HCT116 (cell line): ENCODE measurements at regions of chr15 and their contacts with region 1.

Region 1: DNA sequence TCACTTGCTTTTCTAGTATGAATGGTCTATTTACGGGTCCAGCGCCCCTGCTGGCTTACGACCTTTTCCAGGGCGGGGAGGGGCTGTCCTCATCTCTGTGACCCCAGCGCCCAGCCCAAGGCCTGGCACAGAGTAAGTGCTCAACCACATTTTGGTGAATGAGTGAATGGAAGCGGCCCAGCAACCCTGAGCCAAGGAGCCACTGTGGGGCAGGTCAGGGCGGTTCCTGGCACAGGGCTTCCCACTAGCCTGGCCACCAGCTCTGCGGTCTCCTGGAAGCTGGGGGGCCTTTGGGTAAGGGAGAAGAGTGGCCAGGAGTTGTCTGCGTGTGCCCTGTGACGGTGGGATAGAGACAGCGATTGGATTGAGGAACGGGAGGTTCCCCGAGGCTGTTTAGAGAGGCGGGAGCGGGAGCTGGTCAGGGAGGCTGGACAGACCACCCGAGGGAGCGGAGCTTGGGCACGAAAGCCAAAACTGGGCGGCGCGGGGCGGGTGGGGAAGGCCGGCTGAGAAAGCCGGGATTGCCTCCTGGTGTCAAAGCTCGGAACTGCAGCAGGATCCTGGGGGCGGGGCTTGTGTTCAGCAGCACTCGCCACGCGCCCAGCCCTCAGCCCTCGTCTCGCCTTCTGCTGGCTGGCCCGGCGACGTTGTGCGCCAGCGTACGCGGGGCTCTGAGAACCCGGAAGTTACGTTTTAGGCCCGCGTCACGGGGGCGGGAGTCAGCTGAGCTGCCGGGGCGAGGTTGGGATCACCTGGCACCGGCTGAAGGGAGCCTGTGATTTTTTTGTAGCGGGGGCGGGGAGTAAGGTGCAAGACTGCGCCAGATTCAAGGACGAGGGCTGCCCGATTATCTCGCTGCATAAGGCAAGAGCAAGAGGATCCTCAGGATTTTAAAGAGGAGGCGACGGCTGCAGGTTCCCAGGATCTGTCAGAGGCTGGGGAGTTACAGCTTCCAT is at the start of gene VPS18:
- DNase-seq: peak; percentile 94
- ATAC-seq: peak; percentile 93
- H3K4me3 ChIP-seq: peak within 1 kb of the TSS; percentile 94
- H3K27ac ChIP-seq: peak within 1 kb of the TSS; percentile 73
- H3K4me1 ChIP-seq: peaks cover 7 to 26% of the 10 kb centered on the region in 2 experiments; a peak in 3 of 4 replicates
- H3K27me3 ChIP-seq: no peaks in the 10 kb centered on the region
- CTCF ChIP-seq: peak; percentile 70 to 89 (median 81)
- POLR2A ChIP-seq: peak; percentile 67
- RAD21 ChIP-seq: peak; percentile 97
- total RNA-seq, gene VPS18: 16.9 TPM

Region 2: GRCh38 chr15:40593588-40594428 is 300.2 kb before region 1 on chr15 and contains the start of gene KNL1:
- CTCF ChIA-PET with region 1: interaction called, 9 read pairs
- POLR2A ChIA-PET with region 1: interaction called, 3 read pairs
- RAD21 ChIA-PET with region 1: interaction called in 1 of 2 experiments, 6 read pairs
- intact Hi-C with region 1: loop called (anchors 5 kb)
- DNase-seq: peak; percentile 93
- ATAC-seq: peak; percentile 81
- H3K4me3 ChIP-seq: peak within 1 kb of the TSS; percentile 80 to 89
- H3K27ac ChIP-seq: peak within 1 kb of the TSS; percentile 89
- H3K4me1 ChIP-seq: peaks cover 0 to 24% of the 10 kb centered on the region in 2 experiments; a peak in 2 of 4 replicates
- H3K27me3 ChIP-seq: no peaks in the 10 kb centered on the region
- CTCF ChIP-seq: no peak
- POLR2A ChIP-seq: peak; percentile 62
- RAD21 ChIP-seq: no peak
- total RNA-seq, gene KNL1: 30.6 TPM

Region 3: GRCh38 chr15:40684381-40684780 is 209.6 kb before region 1 on chr15:
- CTCF ChIA-PET with region 1: no interaction called
- POLR2A ChIA-PET with region 1: interaction called, 4 read pairs
- RAD21 ChIA-PET with region 1: no interaction called
- intact Hi-C with region 1: loop called (anchors 1 kb)
- DNase-seq: no peak
- ATAC-seq: no peak
- H3K4me3 ChIP-seq: no peak overlapping the region
- H3K27ac ChIP-seq: no peak overlapping the region
- H3K4me1 ChIP-seq: no peaks in the 10 kb centered on the region
- H3K27me3 ChIP-seq: no peaks in the 10 kb centered on the region
- CTCF ChIP-seq: no peak
- POLR2A ChIP-seq: no peak
- RAD21 ChIP-seq: no peak

Region 4: GRCh38 chr15:40746916-40747514 is 147.0 kb before region 1 on chr15:
- CTCF ChIA-PET with region 1: interaction called, 7 read pairs
- POLR2A ChIA-PET with region 1: interaction called, 4 read pairs
- RAD21 ChIA-PET with region 1: interaction called in 1 of 2 experiments, 3 read pairs
- intact Hi-C with region 1: loop called (anchors 1 kb)
- DNase-seq: no peak
- ATAC-seq: no peak
- H3K4me3 ChIP-seq: no peak overlapping the region
- H3K27ac ChIP-seq: no peak overlapping the region
- H3K4me1 ChIP-seq: no peaks in the 10 kb centered on the region
- H3K27me3 ChIP-seq: no peaks in the 10 kb centered on the region
- CTCF ChIP-seq: no peak
- POLR2A ChIP-seq: no peak
- RAD21 ChIP-seq: no peak

Region 5: GRCh38 chr15:40857601-40858341 is 36.2 kb before region 1 on chr15:
- CTCF ChIA-PET with region 1: interaction called, 166 read pairs
- POLR2A ChIA-PET with region 1: interaction called, 34 read pairs
- RAD21 ChIA-PET with region 1: interaction called, 28 to 29 read pairs
- intact Hi-C with region 1: loop called (anchors 1 kb)
- DNase-seq: no peak
- ATAC-seq: peak; percentile 85
- H3K4me3 ChIP-seq: no peak overlapping the region
- H3K27ac ChIP-seq: peak overlapping the region; percentile 52
- H3K4me1 ChIP-seq: peaks cover 16 to 26% of the 10 kb centered on the region in 2 experiments
- H3K27me3 ChIP-seq: no peaks in the 10 kb centered on the region
- CTCF ChIP-seq: peak; percentile 79 to 99 (median 94)
- POLR2A ChIP-seq: no peak
- RAD21 ChIP-seq: peak; percentile 81

Region 6: GRCh38 chr15:40863660-40864270 is 30.2 kb before region 1 on chr15:
- CTCF ChIA-PET with region 1: interaction called, 166 read pairs
- POLR2A ChIA-PET with region 1: interaction called, 34 read pairs
- RAD21 ChIA-PET with region 1: interaction called, 28 to 29 read pairs
- intact Hi-C with region 1: no loop called
- DNase-seq: no peak
- ATAC-seq: no peak
- H3K4me3 ChIP-seq: no peak overlapping the region
- H3K27ac ChIP-seq: no peak overlapping the region
- H3K4me1 ChIP-seq: peaks cover 14 to 20% of the 10 kb centered on the region in 2 experiments
- H3K27me3 ChIP-seq: no peaks in the 10 kb centered on the region
- CTCF ChIP-seq: no peak
- POLR2A ChIP-seq: no peak
- RAD21 ChIP-seq: no peak

Region 7: GRCh38 chr15:40873625-40874561 is 20.1 kb before region 1 on chr15 and contains the start of gene RHOV:
- CTCF ChIA-PET with region 1: interaction called, 30 read pairs
- POLR2A ChIA-PET with region 1: interaction called, 19 read pairs
- RAD21 ChIA-PET with region 1: interaction called in 1 of 2 experiments, 8 read pairs
- intact Hi-C with region 1: no loop called
- DNase-seq: peak; percentile 67
- ATAC-seq: peak; percentile 94
- H3K4me3 ChIP-seq: peak within 1 kb of the TSS; percentile 56 to 72
- H3K27ac ChIP-seq: peak within 1 kb of the TSS; percentile 74
- H3K4me1 ChIP-seq: peaks cover 36 to 48% of the 10 kb centered on the region in 2 experiments
- H3K27me3 ChIP-seq: no peaks in the 10 kb centered on the region
- CTCF ChIP-seq: peak; percentile 42 to 59 (median 43); a peak in 5 of 6 replicates
- POLR2A ChIP-seq: peak; percentile 84
- RAD21 ChIP-seq: peak; percentile 49
- total RNA-seq, gene RHOV: 6.0 TPM